Heart left ventricle (tissue), 16 donors: ENCODE measurements at regions of chr12 and their contacts with region 1.

Region 1: DNA sequence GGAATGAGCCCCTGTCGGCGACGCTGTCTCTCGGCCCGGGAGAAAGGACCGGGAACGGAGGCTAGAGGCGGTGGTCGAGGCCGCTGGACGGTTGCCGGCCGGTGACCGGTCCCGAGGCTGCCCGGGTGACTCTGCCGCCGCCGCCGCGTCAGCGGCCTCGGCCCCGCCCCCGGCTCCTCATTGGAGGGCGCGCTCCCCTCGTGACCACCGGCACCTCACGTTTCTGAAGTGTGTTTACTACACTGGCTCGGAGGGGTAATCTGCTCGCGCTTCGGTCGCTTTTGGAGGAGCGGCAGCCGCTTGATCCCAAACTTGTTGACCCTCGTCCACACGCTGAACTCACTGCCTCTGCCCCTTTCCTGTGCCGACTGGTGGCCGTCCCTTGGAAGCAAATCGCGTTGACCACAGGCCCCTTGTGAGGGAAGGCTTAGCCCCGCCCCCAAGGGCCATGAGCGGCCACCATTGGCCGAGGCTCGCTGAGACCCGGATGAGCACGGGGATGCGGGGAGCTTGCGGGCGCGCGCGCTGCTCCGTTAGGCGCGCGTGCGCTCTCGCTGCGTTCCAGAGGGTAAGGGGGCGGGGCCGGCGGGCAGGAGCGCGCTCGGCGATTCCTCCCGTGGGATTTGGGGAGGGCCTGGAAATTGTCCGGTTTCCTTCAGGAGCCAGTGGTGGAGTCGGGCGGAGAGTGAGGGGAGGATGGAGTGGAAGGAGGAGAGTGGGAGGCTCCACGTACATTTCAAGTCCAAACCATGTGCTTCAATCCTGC is at the start of gene CRY1:
- DNase-seq: peak; percentile 96 to 98 (median 97)
- ATAC-seq: peak; percentile 96 to 99 (median 98)
- H3K4me3 ChIP-seq: peak within 1 kb of the TSS; percentile 73 to 98 (median 86)
- H3K27ac ChIP-seq: peak within 1 kb of the TSS; percentile 72 to 99 (median 95)
- H3K4me1 ChIP-seq: peaks cover 0 to 30% (median 18%) of the 10 kb centered on the region in 12 donors
- H3K27me3 ChIP-seq: no peaks in the 10 kb centered on the region
- CTCF ChIP-seq: peak in 2 of 12 donors; percentile 4 to 20
- POLR2A ChIP-seq: peak; percentile 42 to 89
- total RNA-seq, gene CRY1: 6.7 to 20.4 (median 12.0) TPM

Region 2: DNA sequence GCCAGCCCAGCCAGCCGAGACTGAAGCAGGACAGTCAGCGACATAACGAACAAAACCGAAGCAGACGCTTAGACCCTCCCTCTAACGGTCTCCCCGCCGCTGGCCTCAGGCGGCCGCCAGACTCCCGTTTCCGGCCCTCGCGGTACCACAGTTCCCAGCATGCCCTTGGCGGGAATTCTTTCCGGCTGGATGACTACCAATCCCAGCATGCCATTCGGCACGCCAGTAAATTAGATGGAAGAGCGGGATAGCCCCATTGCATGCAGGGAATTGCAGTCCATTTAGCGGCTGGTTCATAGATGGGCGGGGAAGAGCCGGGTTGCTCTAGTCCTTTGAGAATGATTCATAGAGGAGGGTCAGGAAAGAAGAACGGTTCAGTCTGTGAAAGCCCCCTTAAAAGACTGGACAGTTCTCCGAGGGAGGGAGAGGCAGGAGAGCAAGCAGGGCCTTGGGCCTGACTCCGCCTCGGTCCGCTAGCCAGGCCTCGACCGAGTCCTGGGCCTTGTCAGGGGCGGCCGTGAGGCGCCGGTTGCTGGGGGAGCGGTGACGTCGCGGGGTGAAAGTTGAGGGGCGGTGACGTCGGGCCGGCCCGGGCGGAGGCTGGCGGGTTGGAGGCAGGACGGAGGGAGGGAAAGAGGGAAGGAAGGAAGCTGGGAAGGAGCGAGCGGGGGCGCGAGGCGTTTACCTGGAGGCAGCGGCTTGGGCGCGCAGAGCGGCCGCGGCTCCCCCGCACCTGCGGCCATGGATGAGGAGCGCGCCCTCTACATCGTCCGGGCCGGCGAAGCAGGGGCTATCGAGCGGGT is 319.4 kb before region 1 on chr12 and contains the start of gene RIC8B:
- intact Hi-C with region 1: loop called in 1 of 10 experiments (anchors 2 kb)
- DNase-seq: peak; percentile 96 to 97 (median 97)
- ATAC-seq: peak; percentile 97 to 98 (median 97)
- H3K4me3 ChIP-seq: peak within 1 kb of the TSS; percentile 75 to 97 (median 90)
- H3K27ac ChIP-seq: peak within 1 kb of the TSS; percentile 71 to 99 (median 96)
- H3K4me1 ChIP-seq: peaks cover 5 to 31% (median 13%) of the 10 kb centered on the region in 12 donors
- H3K27me3 ChIP-seq: no peaks in the 10 kb centered on the region
- CTCF ChIP-seq: peak in 1 of 12 donors; percentile 13
- POLR2A ChIP-seq: peak in 1 of 2 donors; percentile 74
- total RNA-seq, gene RIC8B: 14.2 to 27.5 (median 22.8) TPM

Region 3: DNA sequence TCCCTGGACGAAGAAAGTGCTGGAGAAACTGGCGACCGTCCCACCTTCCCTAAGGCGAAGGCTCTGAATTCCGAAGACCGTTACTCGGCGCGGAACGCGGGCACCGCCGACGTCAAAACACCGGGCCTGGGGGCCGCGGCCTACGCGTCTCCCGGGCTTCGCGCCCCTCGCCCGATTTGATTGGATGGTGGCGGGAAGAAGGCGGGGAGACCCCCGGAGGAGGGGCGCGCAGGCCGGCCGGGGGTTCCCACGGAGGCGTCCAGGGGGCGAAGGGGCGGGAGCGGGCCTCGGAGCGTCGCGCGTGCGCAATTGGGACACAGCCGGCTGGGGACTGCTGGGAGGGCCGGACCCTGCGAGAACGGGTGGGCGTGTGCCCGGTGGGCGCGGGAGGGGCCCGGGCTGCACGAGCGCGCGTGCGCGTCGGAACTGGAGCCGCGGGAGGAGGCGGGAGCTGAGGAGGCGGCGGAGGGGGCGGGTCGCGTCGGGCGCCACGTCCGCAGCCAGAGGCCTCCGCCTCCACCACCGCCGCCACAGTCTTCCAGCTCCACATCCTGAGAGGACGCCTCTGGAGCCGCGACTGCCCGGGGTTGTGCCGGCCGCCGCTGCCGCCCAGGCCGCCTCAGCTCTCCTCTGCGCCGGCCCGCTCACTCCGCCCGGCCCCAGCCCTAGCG is 138.1 kb before region 1 on chr12 and contains the start of gene TMEM263:
- intact Hi-C with region 1: loop called in 7 of 10 experiments (anchors 1 to 10 kb)
- DNase-seq: peak; percentile 96 to 98 (median 97)
- ATAC-seq: peak; percentile 88 to 96 (median 92)
- H3K4me3 ChIP-seq: peak within 1 kb of the TSS; percentile 59 to 98 (median 90)
- H3K27ac ChIP-seq: peak within 1 kb of the TSS; percentile 95 to 100 (median 99)
- H3K4me1 ChIP-seq: peaks cover 0 to 43% (median 25%) of the 10 kb centered on the region in 12 donors
- H3K27me3 ChIP-seq: no peaks in the 10 kb centered on the region
- CTCF ChIP-seq: peak in 3 of 12 donors; percentile 7 to 26 (median 8)
- POLR2A ChIP-seq: peak; percentile 72 to 96
- total RNA-seq, gene TMEM263: 26.8 to 59.2 (median 36.3) TPM

Region 4: DNA sequence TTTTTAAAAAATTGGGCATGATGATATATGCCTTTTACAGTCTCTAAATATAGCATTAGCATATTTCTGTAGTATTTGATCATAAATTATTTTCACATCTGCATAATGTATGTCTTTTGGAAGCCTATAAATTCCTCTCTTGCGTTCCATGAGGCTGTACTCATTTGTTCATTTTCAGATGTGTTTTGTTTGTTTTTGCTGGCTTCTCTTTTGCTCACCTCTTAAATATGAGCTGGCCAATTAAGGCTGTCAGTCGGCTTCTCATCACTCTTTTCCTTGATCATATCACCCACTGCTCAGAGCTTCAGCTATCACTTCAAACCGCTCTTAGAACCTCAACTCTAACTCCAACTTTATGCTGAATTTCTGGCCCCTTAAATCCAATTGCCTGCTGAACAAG is 131.3 kb before region 1 on chr12:
- intact Hi-C with region 1: loop called in 6 of 10 experiments (anchors 2 to 10 kb)
- DNase-seq: no peak
- ATAC-seq: no peak
- H3K4me3 ChIP-seq: no peak overlapping the region
- H3K27ac ChIP-seq: no peak overlapping the region
- H3K4me1 ChIP-seq: peaks cover 0 to 63% (median 32%) of the 10 kb centered on the region in 12 donors
- H3K27me3 ChIP-seq: no peaks in the 10 kb centered on the region
- CTCF ChIP-seq: no peak
- POLR2A ChIP-seq: no peak

Region 5: DNA sequence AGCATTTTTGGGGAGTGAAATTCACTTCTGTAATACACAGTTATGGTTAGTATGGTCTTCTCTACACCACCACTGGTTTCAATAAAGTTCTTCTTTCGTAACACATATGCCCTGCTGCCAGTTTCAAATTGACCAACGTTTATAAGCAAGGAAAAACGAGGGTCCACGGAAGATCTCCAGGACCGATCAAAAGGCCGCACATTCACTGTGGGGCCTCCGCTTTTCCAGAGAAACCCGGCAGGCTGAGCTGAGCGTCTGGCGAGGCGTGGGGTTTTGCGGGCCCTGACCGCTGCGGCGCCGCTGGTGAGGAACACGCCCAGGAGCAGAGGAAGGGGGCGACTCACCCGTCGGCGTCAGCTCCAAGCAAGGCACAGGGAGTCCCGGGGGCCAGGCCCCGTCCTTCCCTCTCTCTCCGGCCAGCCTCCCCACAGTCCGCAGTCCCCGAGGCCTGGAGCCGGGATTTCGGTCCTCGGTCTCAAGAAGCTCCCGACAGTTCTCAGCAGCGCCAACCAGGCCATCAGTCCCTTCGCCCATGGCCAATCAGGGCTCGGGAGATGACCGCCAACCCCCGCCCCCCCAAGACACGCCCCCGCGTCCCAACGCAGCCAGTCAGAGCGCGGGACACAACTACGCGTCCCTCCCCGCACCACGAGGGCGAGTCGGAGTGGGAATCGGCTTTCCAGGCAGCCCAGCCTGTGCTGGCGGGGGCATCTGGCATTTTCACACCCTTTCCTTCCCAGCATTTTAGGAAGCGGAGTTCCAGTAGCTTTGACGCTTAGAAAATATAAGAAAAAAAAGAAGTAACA is 106.8 kb before region 1 on chr12 and contains the start of gene MTERF2:
- intact Hi-C with region 1: loop called in 7 of 10 experiments (anchors 1 to 10 kb)
- DNase-seq: peak; percentile 94 to 96 (median 95)
- ATAC-seq: peak; percentile 98 to 99 (median 99)
- H3K4me3 ChIP-seq: peak within 1 kb of the TSS; percentile 61 to 85 (median 71)
- H3K27ac ChIP-seq: peak within 1 kb of the TSS; percentile 78 to 96 (median 90)
- H3K4me1 ChIP-seq: peaks cover 4 to 34% (median 17%) of the 10 kb centered on the region in 12 donors
- H3K27me3 ChIP-seq: no peaks in the 10 kb centered on the region
- CTCF ChIP-seq: peak in 2 of 12 donors; percentile 11 to 16
- POLR2A ChIP-seq: peak in 1 of 2 donors; percentile 93
- total RNA-seq, gene MTERF2: 14.9 to 46.1 (median 27.8) TPM

Region 6: GRCh38 chr12:107027636-107028053 is 66.0 kb before region 1 on chr12:
- intact Hi-C with region 1: loop called in 2 of 10 experiments (anchors 1 to 10 kb)
- DNase-seq: no peak
- ATAC-seq: peak; percentile 93 to 96 (median 94)
- H3K4me3 ChIP-seq: peak overlapping the region in 3 of 12 donors; percentile 1 to 12 (median 6)
- H3K27ac ChIP-seq: peak overlapping the region in 11 of 12 donors; percentile 26 to 82 (median 56)
- H3K4me1 ChIP-seq: peaks cover 3 to 63% (median 34%) of the 10 kb centered on the region in 12 donors
- H3K27me3 ChIP-seq: no peaks in the 10 kb centered on the region
- CTCF ChIP-seq: no peak
- POLR2A ChIP-seq: no peak